HCT116 (cell line): ENCODE measurements at regions of chr12 and their contacts with region 1.

Region 1: DNA sequence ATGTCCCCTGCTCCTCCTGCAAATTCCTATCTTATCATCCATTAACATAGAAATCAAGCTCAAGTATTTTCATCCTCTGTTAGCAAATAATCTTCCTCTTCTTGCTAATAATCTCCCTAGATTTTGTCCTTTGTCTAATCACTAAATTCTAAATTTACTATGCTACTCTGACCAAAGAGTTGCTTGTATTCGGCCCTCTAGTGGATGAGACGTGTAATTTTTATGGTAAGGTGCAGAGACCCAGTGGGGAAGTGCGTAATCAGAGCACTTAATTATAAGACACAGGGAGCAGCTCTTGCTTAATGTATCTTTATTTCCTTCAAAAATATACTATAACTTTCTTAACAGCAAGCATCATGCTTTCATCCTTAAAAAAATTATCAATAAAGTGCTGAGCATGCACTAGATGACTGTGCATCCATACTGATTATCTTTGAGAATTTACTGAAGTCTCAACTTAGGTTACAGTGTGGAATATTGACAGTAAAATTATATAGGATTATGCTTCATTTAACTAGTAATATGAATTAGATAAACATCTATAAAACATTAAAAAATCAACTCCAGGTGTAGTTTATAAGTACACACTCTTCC is 212.6 kb downstream of the SLC16A7 start:
- DNase-seq: peak; percentile 13
- ATAC-seq: peak; percentile 84
- H3K4me3 ChIP-seq: no peak overlapping the region
- H3K27ac ChIP-seq: no peak overlapping the region
- H3K4me1 ChIP-seq: no peaks in the 10 kb centered on the region
- H3K27me3 ChIP-seq: no peaks in the 10 kb centered on the region
- CTCF ChIP-seq: peak; percentile 35 to 80 (median 67); a peak in 5 of 6 replicates
- POLR2A ChIP-seq: no peak
- RAD21 ChIP-seq: peak; percentile 55

Region 2: GRCh38 chr12:57888409-57889157 is 1919.8 kb before region 1 on chr12:
- CTCF ChIA-PET with region 1: no interaction called
- POLR2A ChIA-PET with region 1: no interaction called
- RAD21 ChIA-PET with region 1: no interaction called
- intact Hi-C with region 1: no loop called
- DNase-seq: no peak
- ATAC-seq: peak; percentile 46
- H3K4me3 ChIP-seq: no peak overlapping the region
- H3K27ac ChIP-seq: no peak overlapping the region
- H3K4me1 ChIP-seq: peaks cover 3 to 26% of the 10 kb centered on the region in 2 experiments; a peak in 3 of 4 replicates
- H3K27me3 ChIP-seq: no peaks in the 10 kb centered on the region
- CTCF ChIP-seq: no peak
- POLR2A ChIP-seq: no peak
- RAD21 ChIP-seq: no peak

Region 3: GRCh38 chr12:59403259-59403932 is 405.0 kb before region 1 on chr12:
- CTCF ChIA-PET with region 1: interaction called, 4 read pairs
- POLR2A ChIA-PET with region 1: no interaction called
- RAD21 ChIA-PET with region 1: no interaction called
- intact Hi-C with region 1: loop called (anchors 10 kb)
- DNase-seq: peak; percentile 55
- ATAC-seq: peak; percentile 90
- H3K4me3 ChIP-seq: peak overlapping the region; percentile 13 to 15; a peak in 3 of 4 replicates
- H3K27ac ChIP-seq: no peak overlapping the region
- H3K4me1 ChIP-seq: no peaks in the 10 kb centered on the region
- H3K27me3 ChIP-seq: no peaks in the 10 kb centered on the region
- CTCF ChIP-seq: peak; percentile 50 to 85 (median 82); a peak in 5 of 6 replicates
- POLR2A ChIP-seq: no peak
- RAD21 ChIP-seq: peak; percentile 67

Region 4: GRCh38 chr12:59431266-59431665 is 377.1 kb before region 1 on chr12:
- CTCF ChIA-PET with region 1: no interaction called
- POLR2A ChIA-PET with region 1: no interaction called
- RAD21 ChIA-PET with region 1: no interaction called
- intact Hi-C with region 1: loop called (anchors 5 kb)
- DNase-seq: no peak
- ATAC-seq: no peak
- H3K4me3 ChIP-seq: no peak overlapping the region
- H3K27ac ChIP-seq: no peak overlapping the region
- H3K4me1 ChIP-seq: no peaks in the 10 kb centered on the region
- H3K27me3 ChIP-seq: no peaks in the 10 kb centered on the region
- CTCF ChIP-seq: peak in 2 of 3 experiments; percentile 16 to 19; a peak in 1 of 6 replicates
- POLR2A ChIP-seq: no peak
- RAD21 ChIP-seq: peak; percentile 42

Region 5: GRCh38 chr12:59763835-59764234 is 44.6 kb before region 1 on chr12:
- CTCF ChIA-PET with region 1: no interaction called
- POLR2A ChIA-PET with region 1: no interaction called
- RAD21 ChIA-PET with region 1: no interaction called
- intact Hi-C with region 1: no loop called
- DNase-seq: no peak
- ATAC-seq: no peak
- H3K4me3 ChIP-seq: no peak overlapping the region
- H3K27ac ChIP-seq: no peak overlapping the region
- H3K4me1 ChIP-seq: no peaks in the 10 kb centered on the region
- H3K27me3 ChIP-seq: no peaks in the 10 kb centered on the region
- CTCF ChIP-seq: no peak
- POLR2A ChIP-seq: no peak
- RAD21 ChIP-seq: no peak